GM10248 (cell line): ENCODE measurements at regions of chr9 and their contacts with region 1.

Region 1: GRCh38 chr9:79662537-79662956 is 90.8 kb downstream of the TLE4 start:
- DNase-seq: no peak
- CTCF ChIP-seq: no peak

Region 2: DNA sequence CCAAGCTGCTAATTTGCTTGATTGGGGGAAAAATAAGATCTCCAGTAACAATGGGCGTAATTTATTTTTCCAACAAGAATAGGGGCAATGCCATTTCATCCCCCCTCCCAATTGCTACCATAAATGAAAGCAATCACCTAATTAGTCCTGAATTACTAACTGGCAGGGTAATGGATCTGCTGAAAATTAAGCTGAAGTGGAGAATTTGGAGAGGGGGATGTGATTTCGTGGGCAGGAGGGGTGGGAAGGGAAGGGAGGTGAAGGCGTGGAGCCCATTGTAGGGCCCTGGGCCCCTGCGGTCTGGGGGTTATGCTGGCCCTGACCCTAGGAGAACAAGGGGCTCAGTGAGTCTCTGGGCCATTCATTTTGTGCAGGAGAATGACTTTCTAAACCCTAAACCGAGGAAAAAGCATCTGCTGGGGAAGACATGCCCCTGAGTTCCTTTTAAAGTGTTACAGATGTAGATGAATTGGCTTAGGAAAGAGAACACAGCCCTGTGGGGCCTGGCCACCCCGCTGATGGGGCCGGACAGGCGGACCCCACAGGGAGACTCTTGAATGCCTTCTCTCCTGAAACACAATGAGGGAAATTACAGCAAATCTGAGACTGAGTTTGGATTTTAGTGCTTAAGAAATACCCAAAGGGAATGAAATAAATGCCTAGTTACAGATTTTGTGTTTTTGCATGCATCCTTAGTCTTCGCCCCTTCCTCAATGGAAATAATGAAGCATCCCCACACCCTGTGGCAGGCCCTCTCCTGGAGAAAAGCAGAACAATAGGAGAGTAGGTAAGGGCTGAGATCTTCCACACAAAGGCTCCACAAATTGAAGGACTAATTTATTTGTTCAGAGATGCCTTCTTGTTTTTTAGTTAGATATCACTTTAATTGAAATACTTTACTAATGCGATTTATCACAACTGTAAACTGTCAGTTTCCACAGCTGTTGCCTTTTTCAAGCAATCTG is 1222.4 kb before region 1 on chr9:
- CTCF ChIA-PET with region 1: no interaction called
- POLR2A ChIA-PET with region 1: no interaction called
- DNase-seq: no peak
- CTCF ChIP-seq: no peak

Region 3: DNA sequence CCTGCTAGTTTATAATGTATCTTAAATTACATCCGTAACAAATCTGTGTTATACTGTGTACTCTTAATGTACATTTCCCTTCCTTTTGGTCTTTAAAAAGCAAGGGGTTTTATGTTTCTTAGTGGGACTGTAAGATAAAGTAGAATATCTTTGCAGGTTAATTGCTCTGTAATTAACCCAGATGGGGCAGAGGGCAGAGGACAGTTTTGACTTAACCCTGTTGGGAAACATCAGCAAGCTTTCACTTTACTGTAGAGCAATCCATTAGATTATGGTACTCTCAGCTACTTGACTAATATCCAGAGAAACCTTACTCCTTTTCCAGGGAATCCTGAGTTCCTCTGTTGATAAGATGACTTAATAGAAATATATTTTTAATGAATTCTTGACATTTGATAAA is 16.5 kb before region 1 on chr9:
- CTCF ChIA-PET with region 1: interaction called, 15 read pairs
- POLR2A ChIA-PET with region 1: no interaction called
- DNase-seq: no peak
- CTCF ChIP-seq: no peak

Region 4: DNA sequence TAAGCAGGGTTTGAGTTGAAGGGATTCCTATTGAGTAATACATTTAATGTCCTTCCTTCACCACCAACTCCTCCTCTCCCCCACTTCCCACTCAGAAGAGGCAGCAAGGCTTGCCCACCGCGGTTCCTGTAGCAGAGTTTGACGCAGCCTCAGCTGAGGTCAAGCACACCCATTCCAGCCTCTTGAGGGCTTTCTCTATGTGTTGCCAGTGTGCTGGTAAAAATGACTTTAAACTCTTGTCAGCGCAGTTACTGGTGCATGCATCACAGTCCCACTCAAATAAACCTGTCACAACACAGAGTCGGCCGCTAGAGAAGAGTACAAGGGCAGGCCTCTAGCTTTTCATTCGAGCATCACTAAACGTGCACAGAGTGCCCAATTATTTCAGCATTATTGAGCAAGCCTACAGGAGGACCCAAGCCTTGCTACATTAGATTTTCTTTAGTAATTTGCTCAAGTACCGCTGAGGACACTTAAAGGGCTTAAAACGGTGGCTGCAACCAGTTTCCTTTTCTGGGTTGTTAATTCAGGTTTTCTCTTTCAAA is 11.2 kb before region 1 on chr9:
- CTCF ChIA-PET with region 1: interaction called, 15 read pairs
- POLR2A ChIA-PET with region 1: no interaction called
- DNase-seq: no peak
- CTCF ChIP-seq: no peak